Right ventricle myocardium inferior (tissue), 1 donor: ENCODE measurements at regions of chr18 and their contacts with region 1.

Region 1: DNA sequence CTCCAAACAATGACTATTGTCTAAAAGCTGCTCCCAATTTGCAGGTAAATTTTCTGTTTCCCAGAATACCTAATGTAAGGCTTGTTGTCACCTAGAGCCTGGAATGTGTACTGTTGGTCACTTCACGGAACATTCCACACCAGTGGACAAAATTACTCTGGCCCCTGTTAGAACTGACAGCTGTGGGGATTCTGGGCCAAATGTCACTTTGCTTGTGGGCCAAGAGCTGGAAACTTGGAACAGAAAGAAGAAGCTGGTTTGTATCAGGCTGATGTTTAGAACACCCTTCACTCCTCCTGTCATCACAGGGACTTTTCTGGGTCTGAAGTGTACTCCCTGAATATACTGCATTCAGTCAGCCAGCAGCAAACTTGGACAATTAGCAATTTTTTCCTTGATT is 495.6 kb upstream of the SYT4 start:
- DNase-seq: peak; percentile 45
- ATAC-seq: peak; percentile 93

Region 2: DNA sequence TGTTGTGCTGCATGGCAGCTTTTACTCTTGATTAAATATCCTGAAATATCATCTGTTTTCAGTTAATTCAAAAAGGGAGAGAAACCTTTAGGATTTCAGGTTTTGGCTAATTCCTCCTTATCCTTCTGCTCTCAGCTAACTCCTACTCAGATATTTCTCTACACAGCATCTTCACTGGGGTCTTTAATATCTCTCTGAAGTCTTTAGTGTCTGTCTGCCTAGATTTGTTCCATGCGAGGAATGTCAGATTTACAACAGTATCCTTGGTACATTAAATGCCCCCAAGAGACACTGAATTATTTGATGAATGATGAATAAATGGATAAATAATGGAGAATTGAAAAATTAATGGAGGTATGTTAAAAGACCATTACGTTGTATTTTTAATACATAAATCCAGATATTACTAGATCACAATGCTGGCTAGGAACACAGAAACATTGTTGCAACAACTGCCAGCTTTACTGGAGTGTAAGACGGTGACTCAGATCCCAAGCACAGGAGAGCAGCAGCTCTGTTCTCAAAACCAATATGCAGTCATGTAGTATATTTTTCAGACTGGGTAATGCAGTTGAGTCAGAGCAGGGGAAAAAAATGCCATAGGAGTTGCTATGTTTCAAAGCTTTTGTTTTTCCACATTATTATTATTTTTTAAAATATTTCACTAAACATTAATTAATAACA is 107.7 kb before region 1 on chr18:
- intact Hi-C with region 1: loop called (anchors 2 kb)
- DNase-seq: no peak
- ATAC-seq: no peak

Region 3: DNA sequence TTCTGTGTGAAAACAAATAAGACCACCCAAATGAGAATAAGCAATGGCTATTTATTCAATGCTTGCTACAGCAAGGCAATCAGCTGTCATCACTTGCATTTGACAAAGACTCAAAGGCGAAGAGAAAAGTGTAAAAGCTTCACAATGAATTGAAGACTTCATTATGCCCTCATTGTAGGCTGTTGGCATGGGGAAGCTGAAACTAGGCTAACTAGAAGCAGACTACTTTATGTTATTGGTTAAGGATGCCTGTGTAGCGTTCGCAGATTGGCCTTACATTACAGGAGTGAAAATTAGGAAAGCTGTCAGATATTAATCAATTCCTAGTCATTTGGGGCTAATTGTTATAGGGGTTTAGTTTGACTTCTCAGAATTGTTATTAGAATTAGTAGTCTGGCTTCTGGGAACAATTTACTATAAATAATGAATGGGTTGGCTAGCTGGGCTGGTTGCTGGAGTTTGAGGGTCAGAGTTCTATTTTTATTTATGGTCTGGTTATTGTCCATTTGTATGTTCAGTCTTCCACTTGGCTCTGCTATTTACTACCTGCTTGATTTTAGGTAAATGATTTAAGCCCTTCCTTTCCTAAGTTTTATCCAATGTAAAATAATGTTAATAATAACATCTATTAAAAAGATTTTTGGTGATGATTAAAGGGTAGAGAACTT is 58.4 kb before region 1 on chr18:
- intact Hi-C with region 1: loop called (anchors 2 kb)
- DNase-seq: no peak
- ATAC-seq: peak; percentile 34

Region 4: GRCh38 chr18:44673256-44673880 is 900.5 kb after region 1 on chr18:
- intact Hi-C with region 1: loop called (anchors 5 kb)
- DNase-seq: no peak
- ATAC-seq: peak; percentile 21